ENCODE measurements at regions of chr3 and their contacts with region 1.

Region 1: GRCh38 chr3:24680214-24680967 is 185.7 kb upstream of the THRB start:
- DNase-seq: peak in 4 of 5 donors; percentile 62 to 82 (median 80)
- H3K4me3 ChIP-seq: no peak overlapping the region
- H3K27ac ChIP-seq: no peak overlapping the region
- H3K4me1 ChIP-seq: no peaks in the 10 kb centered on the region
- H3K27me3 ChIP-seq: no peaks in the 10 kb centered on the region
- CTCF ChIP-seq: peak; percentile 65

Region 2: DNA sequence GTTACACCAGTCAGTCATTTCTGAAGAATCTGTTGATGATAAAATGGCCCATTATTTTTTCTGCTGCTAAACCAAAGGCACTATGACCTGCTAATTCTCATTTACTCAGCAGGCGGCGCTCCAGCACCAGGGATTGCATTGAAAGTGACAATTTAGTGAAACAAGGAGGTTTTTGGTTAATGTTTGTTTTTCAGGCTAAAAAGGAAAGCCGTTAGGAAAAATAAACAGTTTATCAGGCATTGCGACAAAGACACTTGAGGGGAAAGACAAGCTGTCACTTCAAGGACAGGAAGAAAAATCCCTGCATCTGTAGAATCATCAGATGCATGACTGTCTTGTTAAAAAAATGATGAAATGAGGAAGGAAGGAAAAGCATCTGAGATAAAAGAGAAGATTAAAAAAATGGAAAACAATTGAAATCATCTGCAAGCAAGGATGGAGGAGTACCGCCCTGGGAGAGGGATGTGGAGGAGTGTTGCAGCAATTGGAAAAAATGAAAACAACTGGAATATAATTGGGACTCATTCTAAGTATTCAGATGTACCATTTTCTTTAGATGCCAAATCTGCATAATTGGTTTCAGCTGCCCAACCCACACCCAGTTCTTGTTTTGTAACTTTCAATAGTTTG is 681.3 kb before region 1 on chr3:
- intact Hi-C with region 1: loop called (anchors 10 kb)
- DNase-seq: peak in 4 of 5 donors; percentile 69 to 85 (median 77)
- H3K4me3 ChIP-seq: no peak overlapping the region
- H3K27ac ChIP-seq: no peak overlapping the region
- H3K4me1 ChIP-seq: peaks cover 0 to 4% (median 0%) of the 10 kb centered on the region in 3 donors
- H3K27me3 ChIP-seq: no peaks in the 10 kb centered on the region
- CTCF ChIP-seq: peak; percentile 96